Activated CD8-positive, alpha-beta memory T cell treated with anti-CD3 and anti-CD28 coated beads, Interleukin-2, amount 10 ng/mL, durations not matched to agents 7 days and 5 days (primary cell): ENCODE measurements at regions of chr6 and their contacts with region 1.

Region 1: GRCh38 chr6:158213925-158214674 is 46.0 kb downstream of the GTF2H5 start:
- DNase-seq: peak; percentile 74
- ATAC-seq: peak; percentile 96
- H3K4me3 Mint-ChIP-seq: no peak overlapping the region
- H3K27ac Mint-ChIP-seq: peak overlapping the region; percentile 36
- H3K4me1 Mint-ChIP-seq: peaks cover 22% of the 10 kb centered on the region
- H3K27me3 Mint-ChIP-seq: no peaks in the 10 kb centered on the region

Region 2: GRCh38 chr6:158002951-158003853 is 210.9 kb before region 1 on chr6:
- CTCF ChIA-PET with region 1: no interaction called
- DNase-seq: no peak
- ATAC-seq: peak; percentile 38
- H3K4me3 Mint-ChIP-seq: no peak overlapping the region
- H3K27ac Mint-ChIP-seq: no peak overlapping the region
- H3K4me1 Mint-ChIP-seq: peaks cover 35% of the 10 kb centered on the region
- H3K27me3 Mint-ChIP-seq: no peaks in the 10 kb centered on the region

Region 3: DNA sequence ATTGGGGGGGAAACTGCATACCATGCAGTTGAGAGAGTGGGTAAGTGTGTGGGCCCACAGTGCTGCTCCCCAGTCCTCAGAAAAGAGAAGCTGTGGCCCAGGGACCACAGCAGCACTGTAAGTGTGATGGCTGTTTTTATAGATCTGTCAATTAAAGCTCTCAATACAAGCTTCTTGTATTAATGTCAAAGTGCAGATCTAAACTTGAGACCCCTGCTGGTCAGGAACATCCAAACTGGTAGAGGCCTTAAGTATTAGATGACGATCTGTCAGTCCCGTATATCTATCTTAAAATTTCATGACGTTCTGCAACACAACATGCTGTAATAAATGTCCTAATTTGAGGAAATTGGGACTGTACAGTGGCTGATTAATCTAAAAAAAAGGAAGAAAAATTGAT is 172.9 kb after region 1 on chr6:
- CTCF ChIA-PET with region 1: interaction called, 12 read pairs
- DNase-seq: no peak
- ATAC-seq: no peak
- H3K4me3 Mint-ChIP-seq: no peak overlapping the region
- H3K27ac Mint-ChIP-seq: no peak overlapping the region
- H3K4me1 Mint-ChIP-seq: peaks cover 2% of the 10 kb centered on the region
- H3K27me3 Mint-ChIP-seq: no peaks in the 10 kb centered on the region

Region 4: GRCh38 chr6:158518191-158519127 is 304.4 kb after region 1 on chr6:
- CTCF ChIA-PET with region 1: interaction called, 18 read pairs
- DNase-seq: peak; percentile 81
- ATAC-seq: peak; percentile 92
- H3K4me3 Mint-ChIP-seq: peak overlapping the region; percentile 83
- H3K27ac Mint-ChIP-seq: peak overlapping the region; percentile 83
- H3K4me1 Mint-ChIP-seq: peaks cover 38% of the 10 kb centered on the region
- H3K27me3 Mint-ChIP-seq: peaks cover 20% of the 10 kb centered on the region

Region 5: DNA sequence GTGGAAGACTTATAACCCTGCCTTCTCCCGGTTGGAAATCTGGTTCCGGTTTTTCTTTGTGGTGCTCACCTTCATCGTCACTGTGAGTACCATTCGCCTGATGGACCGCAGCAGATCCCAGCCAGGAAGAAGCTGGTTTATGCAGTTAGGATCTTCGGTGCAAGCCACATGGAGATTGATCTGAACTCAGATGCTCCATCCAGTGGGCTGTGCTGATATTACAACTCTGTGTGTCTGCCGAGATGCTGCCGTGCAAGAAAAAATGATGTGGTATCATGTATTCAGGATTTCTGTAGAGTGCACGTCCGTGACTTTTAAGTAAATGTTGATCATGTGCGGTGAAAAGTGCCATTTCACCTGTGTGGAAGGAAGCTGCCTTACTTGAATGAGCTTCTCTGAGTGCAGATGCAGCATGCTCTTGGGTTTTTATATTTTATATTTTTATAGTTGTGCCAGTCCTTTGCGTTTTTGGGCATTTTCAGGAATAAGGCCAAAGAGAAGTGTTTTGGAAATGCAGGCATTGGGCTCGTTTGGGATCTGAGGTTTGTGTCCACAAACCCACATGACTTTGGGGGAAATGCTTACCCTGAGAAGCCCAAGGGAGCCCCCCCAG is 391.3 kb after region 1 on chr6:
- CTCF ChIA-PET with region 1: interaction called, 20 read pairs
- DNase-seq: peak; percentile 70
- ATAC-seq: peak; percentile 61
- H3K4me3 Mint-ChIP-seq: no peak overlapping the region
- H3K27ac Mint-ChIP-seq: peak overlapping the region; percentile 19
- H3K4me1 Mint-ChIP-seq: peaks cover 3% of the 10 kb centered on the region
- H3K27me3 Mint-ChIP-seq: no peaks in the 10 kb centered on the region